ENCODE measurements at regions of chrX and their contacts with region 1.

Region 1: DNA sequence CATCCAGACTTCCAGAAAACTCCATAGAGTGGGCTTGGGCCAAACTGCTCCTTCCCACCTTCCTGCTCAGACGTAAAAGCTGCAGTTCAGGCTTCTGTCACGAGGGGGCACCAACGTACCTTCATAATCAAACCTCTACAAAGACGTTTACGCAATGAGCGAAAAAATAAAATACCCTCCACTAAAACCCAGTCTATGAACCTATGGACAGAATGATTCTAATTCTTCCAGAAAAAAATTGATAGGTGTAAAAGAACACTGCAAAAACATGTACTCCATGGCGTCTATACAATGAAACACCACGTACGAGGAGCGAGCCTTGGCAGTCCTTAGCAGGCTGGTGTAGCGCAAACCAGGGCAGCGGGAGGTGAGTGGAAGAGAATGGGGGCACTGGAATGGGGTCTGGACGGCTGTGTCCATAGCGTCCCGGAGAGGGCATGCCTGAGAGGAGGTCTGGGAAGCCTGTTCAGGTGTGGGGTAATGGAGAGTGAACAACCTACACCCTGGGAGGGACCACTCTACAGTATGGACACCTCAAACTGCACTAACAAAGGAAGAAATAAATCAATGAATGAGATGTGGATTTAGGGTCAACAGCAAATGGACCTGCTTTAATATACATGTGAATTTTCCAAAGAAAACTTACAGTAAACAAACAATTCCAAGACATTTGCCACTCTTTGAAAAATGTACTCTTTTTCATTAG is 14.4 kb upstream of the RAB40A start:
- DNase-seq: peak; percentile 65
- H3K4me3 ChIP-seq: peak overlapping the region; percentile 10 to 20
- H3K27ac ChIP-seq: peak overlapping the region; percentile 57 to 81
- H3K4me1 ChIP-seq: no peaks in the 10 kb centered on the region
- H3K27me3 ChIP-seq: no peaks in the 10 kb centered on the region
- CTCF ChIP-seq: peak; percentile 31 to 80 (median 68)
- POLR2A ChIP-seq: no peak

Region 2: GRCh38 chrX:103347682-103348397 is 185.8 kb before region 1 on chrX:
- intact Hi-C with region 1: no loop called
- DNase-seq: no peak
- H3K4me3 ChIP-seq: no peak overlapping the region
- H3K27ac ChIP-seq: no peak overlapping the region
- H3K4me1 ChIP-seq: no peaks in the 10 kb centered on the region
- H3K27me3 ChIP-seq: no peaks in the 10 kb centered on the region
- CTCF ChIP-seq: no peak
- POLR2A ChIP-seq: no peak

Region 3: DNA sequence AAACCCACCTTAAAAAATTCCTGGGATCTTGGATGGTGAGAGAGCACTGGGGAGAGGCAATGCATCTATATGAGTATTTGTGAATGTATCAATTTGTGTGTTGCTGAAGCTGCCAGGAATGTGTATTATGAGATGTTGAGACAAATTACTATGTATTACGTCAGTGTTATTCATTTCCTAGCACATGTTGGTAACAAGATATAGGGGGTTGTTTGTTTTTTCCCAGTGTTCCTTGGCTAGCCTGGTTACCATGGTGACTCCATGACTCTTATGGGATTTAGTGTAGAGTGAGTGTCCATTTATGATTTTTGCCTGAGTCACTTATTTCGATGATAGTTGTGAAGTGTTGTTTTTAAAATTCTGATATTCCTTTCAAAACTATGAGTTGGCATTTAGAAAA is 80.0 kb before region 1 on chrX:
- intact Hi-C with region 1: no loop called
- DNase-seq: no peak
- H3K4me3 ChIP-seq: no peak overlapping the region
- H3K27ac ChIP-seq: no peak overlapping the region
- H3K4me1 ChIP-seq: no peaks in the 10 kb centered on the region
- H3K27me3 ChIP-seq: no peaks in the 10 kb centered on the region
- CTCF ChIP-seq: no peak
- POLR2A ChIP-seq: no peak

Region 4: GRCh38 chrX:103629318-103630170 is 95.9 kb after region 1 on chrX:
- intact Hi-C with region 1: loop called (anchors 2 kb)
- DNase-seq: peak; percentile 57
- H3K4me3 ChIP-seq: peak overlapping the region; percentile 48 to 52
- H3K27ac ChIP-seq: peak overlapping the region; percentile 94 to 95
- H3K4me1 ChIP-seq: no peaks in the 10 kb centered on the region
- H3K27me3 ChIP-seq: no peaks in the 10 kb centered on the region
- CTCF ChIP-seq: peak in 3 of 4 experiments; percentile 15 to 52 (median 49)
- POLR2A ChIP-seq: peak; percentile 45

Region 5: GRCh38 chrX:103817502-103817901 is 283.8 kb after region 1 on chrX:
- intact Hi-C with region 1: loop called (anchors 5 kb)
- DNase-seq: peak; percentile 33
- H3K4me3 ChIP-seq: no peak overlapping the region
- H3K27ac ChIP-seq: no peak overlapping the region
- H3K4me1 ChIP-seq: no peaks in the 10 kb centered on the region
- H3K27me3 ChIP-seq: no peaks in the 10 kb centered on the region
- CTCF ChIP-seq: peak; percentile 57 to 81 (median 76)
- POLR2A ChIP-seq: no peak